B cell (primary cell): ENCODE measurements at regions of chr17 and their contacts with region 1.

Region 1: DNA sequence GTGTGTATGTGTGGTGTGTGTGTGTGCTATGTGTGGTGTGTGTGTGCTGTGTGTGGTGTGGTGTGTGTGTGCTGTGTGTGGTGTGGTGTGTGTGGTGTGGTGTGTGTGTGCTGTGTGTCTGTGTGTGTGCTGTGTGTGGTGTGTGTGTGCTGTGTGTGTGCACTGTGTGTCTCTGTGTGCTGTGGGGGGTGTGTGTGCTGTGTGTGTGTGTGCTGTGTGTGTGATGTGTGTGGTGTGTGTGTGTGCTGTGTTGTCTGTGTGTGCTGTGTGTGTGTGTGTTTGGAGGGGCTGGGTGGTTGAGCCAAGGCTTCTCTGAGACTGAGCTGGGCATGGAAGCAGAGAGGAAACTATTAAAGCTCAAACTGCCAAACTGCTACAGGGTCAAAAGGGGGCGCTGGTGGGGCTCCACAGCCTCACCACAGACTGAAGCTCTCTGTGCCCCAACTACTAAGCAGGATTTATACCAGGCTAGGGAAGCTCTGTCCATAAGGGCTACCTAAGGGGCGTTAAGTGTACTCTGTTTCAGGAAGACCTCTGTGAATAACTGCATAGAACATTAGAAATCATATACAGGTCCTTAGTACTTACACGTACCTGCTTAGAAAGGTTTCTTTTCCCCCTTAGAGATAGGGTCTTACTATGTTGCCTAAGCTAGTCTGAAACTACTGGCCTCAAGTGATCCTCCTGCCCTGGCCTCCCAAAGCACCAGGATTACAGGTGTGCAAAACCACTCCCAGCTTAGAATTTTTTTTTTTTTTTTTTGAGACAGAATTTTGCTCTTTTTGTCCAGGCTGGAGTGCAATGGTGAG is 27.8 kb upstream of the GHDC start:
- DNase-seq: peak; percentile 65
- ATAC-seq: peak; percentile 64
- H3K4me3 ChIP-seq: no peak overlapping the region
- H3K4me3 Mint-ChIP-seq: no peak overlapping the region
- H3K27ac ChIP-seq: no peak overlapping the region
- H3K27ac Mint-ChIP-seq: no peak overlapping the region
- H3K4me1 ChIP-seq: no peaks in the 10 kb centered on the region
- H3K4me1 Mint-ChIP-seq: no peaks in the 10 kb centered on the region
- H3K27me3 ChIP-seq: no peaks in the 10 kb centered on the region
- H3K27me3 Mint-ChIP-seq: no peaks in the 10 kb centered on the region
- CTCF ChIP-seq: peak; percentile 66

Region 2: DNA sequence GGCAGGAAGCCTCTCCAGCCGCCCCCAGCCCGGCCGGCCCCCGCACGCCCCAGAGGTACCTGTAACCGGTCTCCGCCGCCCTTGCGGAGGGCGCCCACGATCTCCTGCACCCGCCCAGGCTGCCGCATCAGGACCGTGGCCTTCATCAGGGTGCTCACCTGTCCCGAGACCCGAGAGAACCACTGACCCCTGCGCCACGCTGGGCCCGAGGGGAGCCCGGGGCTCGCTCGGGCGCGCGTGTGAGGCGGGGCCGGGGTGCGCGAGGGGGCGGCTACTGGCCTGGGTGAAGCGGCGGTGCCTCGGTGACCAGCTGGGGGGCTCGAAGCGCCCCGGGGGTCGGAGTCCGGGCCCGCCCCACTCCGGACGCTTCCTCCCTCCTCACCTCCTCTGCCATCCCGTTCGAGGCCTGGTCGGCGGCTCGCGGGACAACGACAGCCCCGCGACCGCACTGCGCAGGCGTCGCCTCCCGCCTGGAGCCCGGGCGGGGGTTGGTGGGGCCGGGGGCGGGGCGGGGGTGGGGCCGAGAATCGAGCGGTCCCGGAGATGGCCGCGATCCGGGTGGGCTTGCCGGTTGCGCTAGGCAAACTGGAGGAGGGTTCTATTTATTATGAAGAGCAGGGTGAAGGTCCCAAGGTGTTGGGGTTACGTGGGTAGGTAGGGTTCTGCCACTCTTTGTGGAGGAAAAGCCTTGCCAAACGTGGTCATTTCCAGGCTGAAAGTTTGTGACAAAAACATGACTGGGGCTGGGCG is 386.2 kb before region 1 on chr17 and contains the start of gene NT5C3B:
- CTCF ChIA-PET with region 1: no interaction called
- POLR2A ChIA-PET with region 1: no interaction called
- intact Hi-C with region 1: no loop called
- DNase-seq: peak; percentile 72
- ATAC-seq: peak; percentile 86
- H3K4me3 ChIP-seq: peak within 1 kb of the TSS; percentile 21 to 80 (median 67)
- H3K4me3 Mint-ChIP-seq: peak within 1 kb of the TSS; percentile 92
- H3K27ac ChIP-seq: peak within 1 kb of the TSS in 1 of 2 donors; percentile 62
- H3K27ac Mint-ChIP-seq: peak within 1 kb of the TSS; percentile 85
- H3K4me1 ChIP-seq: peaks cover 12 to 14% of the 10 kb centered on the region in 2 donors
- H3K4me1 Mint-ChIP-seq: peaks cover 13% of the 10 kb centered on the region
- H3K27me3 ChIP-seq: peaks cover 0 to 13% (median 0%) of the 10 kb centered on the region in 4 experiments
- H3K27me3 Mint-ChIP-seq: no peaks in the 10 kb centered on the region
- CTCF ChIP-seq: no peak
- total RNA-seq, gene NT5C3B: 46.5 and 49.6 TPM in 2 replicates

Region 3: DNA sequence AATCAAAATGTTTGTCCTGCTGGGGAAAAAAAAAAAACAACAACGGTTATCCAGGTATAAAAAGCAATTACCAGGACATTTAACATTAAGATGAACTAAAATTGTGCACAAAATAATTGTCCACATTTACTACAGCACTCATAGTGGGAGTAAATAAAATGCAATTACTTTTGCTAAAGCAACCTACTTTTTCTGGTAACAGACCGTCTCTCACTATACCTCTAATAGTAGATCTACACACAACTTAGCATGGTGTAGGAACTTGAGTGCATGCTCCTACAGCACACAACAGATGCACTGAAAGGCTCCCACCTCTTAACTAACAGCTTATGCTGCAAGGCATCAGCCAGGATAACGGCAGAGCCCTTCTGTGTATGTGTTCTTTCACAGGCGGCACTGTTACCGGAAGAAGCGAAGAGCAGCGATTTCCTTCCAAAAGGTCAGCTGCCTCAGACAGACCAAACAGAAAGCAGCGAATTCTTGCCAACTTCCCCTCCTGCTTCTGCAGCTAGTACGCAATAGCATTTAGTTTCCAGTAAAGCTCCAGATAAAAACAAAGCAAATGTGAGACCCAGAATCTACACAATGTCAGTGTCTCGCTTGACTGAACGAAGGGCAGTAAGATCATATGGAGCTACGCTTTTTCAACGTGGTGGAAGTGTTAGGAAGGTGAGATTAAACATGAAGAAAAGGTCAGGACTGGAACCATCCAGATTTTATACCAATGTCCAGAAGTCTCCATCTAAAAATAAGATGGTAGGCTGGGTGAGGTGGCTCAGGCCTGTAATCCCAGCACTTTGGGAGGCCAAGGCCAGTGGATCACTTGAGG is 26.4 kb after region 1 on chr17:
- CTCF ChIA-PET with region 1: interaction called, 15 read pairs
- POLR2A ChIA-PET with region 1: no interaction called
- intact Hi-C with region 1: no loop called
- DNase-seq: peak; percentile 87
- ATAC-seq: peak; percentile 97
- H3K4me3 ChIP-seq: peak overlapping the region; percentile 39 to 86 (median 61)
- H3K4me3 Mint-ChIP-seq: peak overlapping the region; percentile 88
- H3K27ac ChIP-seq: peak overlapping the region; percentile 84 to 93
- H3K27ac Mint-ChIP-seq: peak overlapping the region; percentile 95
- H3K4me1 ChIP-seq: peaks cover 20 to 24% of the 10 kb centered on the region in 2 donors
- H3K4me1 Mint-ChIP-seq: peaks cover 47% of the 10 kb centered on the region
- H3K27me3 ChIP-seq: no peaks in the 10 kb centered on the region
- H3K27me3 Mint-ChIP-seq: no peaks in the 10 kb centered on the region
- CTCF ChIP-seq: no peak

Region 4: DNA sequence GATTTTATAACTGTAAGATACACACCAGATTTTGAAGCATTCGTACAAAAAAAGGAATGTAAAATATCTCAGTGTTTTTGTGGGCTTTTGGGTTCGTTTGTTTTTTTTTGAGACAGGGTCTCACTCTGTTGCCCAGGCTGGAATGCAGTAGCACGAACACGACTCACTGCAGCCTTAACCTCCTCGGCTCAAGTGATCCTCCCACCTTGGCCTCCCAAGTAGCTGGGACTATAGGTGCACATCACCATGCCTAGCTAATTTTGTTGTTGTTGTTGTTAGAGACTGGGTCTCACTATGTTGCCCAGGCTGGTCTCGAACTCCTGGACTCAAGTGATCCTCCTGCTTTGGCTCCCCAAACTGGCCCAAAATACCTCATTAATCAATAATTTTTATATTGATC is 38.2 kb after region 1 on chr17:
- CTCF ChIA-PET with region 1: no interaction called
- POLR2A ChIA-PET with region 1: no interaction called
- intact Hi-C with region 1: no loop called
- DNase-seq: no peak
- ATAC-seq: no peak
- H3K4me3 ChIP-seq: no peak overlapping the region
- H3K4me3 Mint-ChIP-seq: no peak overlapping the region
- H3K27ac ChIP-seq: no peak overlapping the region
- H3K27ac Mint-ChIP-seq: no peak overlapping the region
- H3K4me1 ChIP-seq: peaks cover 4 to 13% of the 10 kb centered on the region in 2 donors
- H3K4me1 Mint-ChIP-seq: peaks cover 21% of the 10 kb centered on the region
- H3K27me3 ChIP-seq: no peaks in the 10 kb centered on the region
- H3K27me3 Mint-ChIP-seq: no peaks in the 10 kb centered on the region
- CTCF ChIP-seq: no peak

Region 5: GRCh38 chr17:42270596-42270995 is 48.5 kb after region 1 on chr17:
- CTCF ChIA-PET with region 1: interaction called, 10 read pairs
- POLR2A ChIA-PET with region 1: interaction called, 4 read pairs
- intact Hi-C with region 1: loop called (anchors 10 kb)
- DNase-seq: no peak
- ATAC-seq: no peak
- H3K4me3 ChIP-seq: no peak overlapping the region
- H3K4me3 Mint-ChIP-seq: no peak overlapping the region
- H3K27ac ChIP-seq: peak overlapping the region in 1 of 2 donors; percentile 1
- H3K27ac Mint-ChIP-seq: no peak overlapping the region
- H3K4me1 ChIP-seq: peaks cover 34 to 41% of the 10 kb centered on the region in 2 donors
- H3K4me1 Mint-ChIP-seq: peaks cover 59% of the 10 kb centered on the region
- H3K27me3 ChIP-seq: no peaks in the 10 kb centered on the region
- H3K27me3 Mint-ChIP-seq: no peaks in the 10 kb centered on the region
- CTCF ChIP-seq: no peak

Region 6: DNA sequence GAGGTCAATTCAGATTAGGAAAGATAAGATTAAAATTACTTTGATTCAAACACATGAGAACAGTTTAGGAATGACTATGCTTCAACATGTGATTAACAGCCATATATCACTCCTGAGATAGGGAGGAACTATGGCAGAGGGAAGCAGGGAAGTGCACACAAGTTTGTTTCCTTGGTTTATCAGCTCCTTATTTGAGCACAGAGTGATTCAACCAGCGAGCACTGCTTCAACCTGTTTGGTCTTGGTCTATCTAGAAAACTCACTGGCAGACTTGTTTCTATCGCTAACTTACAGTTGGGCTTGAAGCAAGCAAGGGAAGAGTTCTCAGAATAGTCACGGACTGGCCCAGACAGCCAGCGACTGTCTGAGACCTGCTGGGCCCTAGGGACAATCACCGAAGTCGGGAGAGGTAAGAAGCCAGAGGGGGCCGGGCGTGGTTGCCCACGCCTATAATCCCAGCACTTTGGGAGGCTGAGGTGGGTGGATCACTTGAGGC is 410.9 kb after region 1 on chr17:
- CTCF ChIA-PET with region 1: no interaction called
- POLR2A ChIA-PET with region 1: no interaction called
- intact Hi-C with region 1: no loop called
- DNase-seq: no peak
- ATAC-seq: no peak
- H3K4me3 ChIP-seq: no peak overlapping the region
- H3K4me3 Mint-ChIP-seq: no peak overlapping the region
- H3K27ac ChIP-seq: no peak overlapping the region
- H3K27ac Mint-ChIP-seq: peak overlapping the region; percentile 32
- H3K4me1 ChIP-seq: no peaks in the 10 kb centered on the region
- H3K4me1 Mint-ChIP-seq: no peaks in the 10 kb centered on the region
- H3K27me3 ChIP-seq: no peaks in the 10 kb centered on the region
- H3K27me3 Mint-ChIP-seq: no peaks in the 10 kb centered on the region
- CTCF ChIP-seq: no peak

Region 7: GRCh38 chr17:42744806-42745617 is 522.9 kb after region 1 on chr17 and contains the start of gene EZH1:
- CTCF ChIA-PET with region 1: no interaction called
- POLR2A ChIA-PET with region 1: no interaction called
- intact Hi-C with region 1: no loop called
- DNase-seq: peak; percentile 95
- ATAC-seq: peak; percentile 86
- H3K4me3 ChIP-seq: peak within 1 kb of the TSS; percentile 56 to 76 (median 70)
- H3K4me3 Mint-ChIP-seq: peak within 1 kb of the TSS; percentile 99
- H3K27ac ChIP-seq: peak within 1 kb of the TSS; percentile 67 to 92
- H3K27ac Mint-ChIP-seq: peak within 1 kb of the TSS; percentile 99
- H3K4me1 ChIP-seq: peaks cover 25 to 27% of the 10 kb centered on the region in 2 donors
- H3K4me1 Mint-ChIP-seq: peaks cover 29% of the 10 kb centered on the region
- H3K27me3 ChIP-seq: peaks cover 0 to 16% (median under 1%) of the 10 kb centered on the region in 4 experiments
- H3K27me3 Mint-ChIP-seq: peaks cover 18% of the 10 kb centered on the region
- CTCF ChIP-seq: no peak
- total RNA-seq, gene EZH1: 169 and 180 TPM in 2 replicates